HAP-1 (cell line): ENCODE measurements at regions of chrX and their contacts with region 1.

Region 1: DNA sequence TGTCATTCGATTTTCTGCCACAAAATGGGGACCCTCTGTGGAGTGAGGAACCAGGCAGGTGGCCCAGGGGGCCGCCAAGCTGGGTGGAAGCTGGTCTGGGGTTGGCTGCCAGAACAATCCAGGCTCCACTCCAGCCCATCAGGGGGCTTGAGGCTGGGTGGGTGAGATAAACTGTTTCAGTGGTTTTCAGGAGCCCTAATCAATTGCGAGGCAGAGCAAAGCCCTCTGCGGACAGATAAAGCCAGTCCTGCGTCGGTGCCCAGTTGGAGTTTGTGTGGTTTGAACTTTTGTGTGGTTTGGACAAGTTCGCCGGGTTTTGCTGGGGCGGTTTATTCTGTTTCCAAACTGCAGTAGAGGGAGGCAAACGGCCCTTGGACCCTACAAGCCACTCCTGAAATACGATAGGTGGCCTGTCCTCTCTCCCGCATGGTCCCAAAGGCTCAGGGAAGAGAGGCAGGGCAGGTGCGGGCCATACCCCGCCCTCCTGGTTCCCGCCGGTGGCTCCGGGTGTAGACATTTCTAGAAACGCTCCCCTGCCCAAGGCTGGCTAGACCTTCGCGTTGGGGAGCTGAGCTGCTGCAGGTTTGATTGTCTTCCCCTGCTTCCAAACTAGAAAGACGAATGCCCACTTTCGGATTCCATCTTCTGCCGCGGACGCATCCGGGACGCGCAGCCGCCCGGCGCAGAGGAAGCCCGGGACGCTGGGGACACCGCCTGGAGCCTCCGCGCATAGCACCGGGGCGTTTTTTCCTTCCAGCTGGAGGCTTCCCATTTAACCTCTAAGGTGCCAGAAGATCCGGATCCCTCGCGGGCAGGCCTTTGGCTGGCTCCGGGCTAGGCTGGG is 169.0 kb upstream of the BCOR start:
- DNase-seq: peak; percentile 57 to 86
- H3K4me3 ChIP-seq: peak overlapping the region; percentile 34
- H3K4me1 ChIP-seq: peaks cover 12% of the 10 kb centered on the region
- H3K27me3 ChIP-seq: no peaks in the 10 kb centered on the region

Region 2: GRCh38 chrX:38494239-38494823 is 1772.4 kb before region 1 on chrX:
- in situ Hi-C with region 1: no loop called
- DNase-seq: no peak
- H3K4me3 ChIP-seq: no peak overlapping the region
- H3K4me1 ChIP-seq: no peaks in the 10 kb centered on the region
- H3K27me3 ChIP-seq: no peaks in the 10 kb centered on the region

Region 3: DNA sequence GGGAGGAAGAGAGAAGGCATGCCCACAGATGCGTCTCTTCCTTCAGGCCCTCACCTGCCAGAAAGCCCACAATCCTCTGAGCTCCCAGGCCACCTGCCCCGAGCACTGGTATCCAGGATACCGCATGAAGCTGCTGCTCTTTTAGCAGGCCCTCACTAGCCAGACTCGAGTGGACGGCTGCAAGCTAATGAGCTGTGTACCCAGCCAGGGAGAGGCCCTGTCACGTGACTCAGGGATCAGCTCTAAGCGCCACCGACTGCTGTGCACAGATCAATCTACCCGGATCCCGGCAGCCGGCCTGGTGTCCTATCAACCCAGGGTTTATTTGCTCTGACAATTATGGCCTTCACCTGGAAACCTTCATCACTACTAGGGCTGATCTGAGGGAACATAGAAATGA is 208.0 kb before region 1 on chrX:
- in situ Hi-C with region 1: no loop called
- DNase-seq: no peak
- H3K4me3 ChIP-seq: no peak overlapping the region
- H3K4me1 ChIP-seq: no peaks in the 10 kb centered on the region
- H3K27me3 ChIP-seq: no peaks in the 10 kb centered on the region

Region 4: DNA sequence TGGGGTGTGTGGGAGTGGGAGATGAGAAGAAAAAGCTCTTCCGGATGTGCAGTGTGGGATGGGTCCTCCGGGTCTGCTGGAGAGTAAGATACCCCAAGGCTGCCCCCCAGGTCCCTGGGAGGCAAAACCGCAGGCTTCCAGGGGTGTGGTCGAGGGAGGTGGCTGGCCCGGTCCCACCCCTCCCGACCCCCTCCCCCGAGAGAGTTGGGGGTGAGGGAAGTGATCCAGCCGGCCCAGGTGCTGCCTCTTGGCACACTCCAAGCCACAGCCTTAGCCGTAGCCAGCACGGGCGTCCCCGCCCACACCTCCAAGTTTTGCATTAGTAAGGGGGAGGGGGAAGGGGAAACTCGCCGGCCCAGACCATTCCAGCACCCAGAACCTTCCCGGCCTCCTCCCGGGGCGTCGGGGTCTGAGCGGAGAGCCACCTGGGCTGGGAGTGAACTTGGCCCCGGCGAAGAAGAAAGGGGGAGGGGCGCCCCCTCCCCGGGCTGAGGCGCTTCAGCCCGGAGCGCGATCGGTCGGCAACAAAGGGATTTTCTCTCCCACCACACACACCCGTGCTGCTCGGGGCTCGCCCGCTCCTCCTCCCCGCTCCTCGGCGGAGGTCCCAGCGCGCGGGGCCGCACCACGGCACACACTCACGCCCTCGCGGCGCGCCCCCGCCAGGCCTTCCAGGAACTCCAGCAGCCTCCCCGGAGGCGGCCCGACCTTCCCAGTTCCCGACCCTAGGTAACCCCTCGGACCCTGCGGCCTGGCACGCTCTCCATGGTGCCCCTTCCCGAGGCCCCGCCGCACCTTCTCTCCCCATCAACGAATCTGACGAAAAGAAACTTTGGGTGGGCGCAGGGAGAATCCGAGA is 183.4 kb before region 1 on chrX:
- in situ Hi-C with region 1: loop called (anchors 10 kb)
- DNase-seq: peak in 1 of 2 experiments; percentile 30
- H3K4me3 ChIP-seq: no peak overlapping the region
- H3K4me1 ChIP-seq: peaks cover 32% of the 10 kb centered on the region
- H3K27me3 ChIP-seq: no peaks in the 10 kb centered on the region

Region 5: GRCh38 chrX:40580537-40581335 is 314.0 kb after region 1 on chrX and contains the start of gene ATP6AP2:
- in situ Hi-C with region 1: no loop called
- DNase-seq: peak; percentile 97 to 98
- H3K4me3 ChIP-seq: peak within 1 kb of the TSS; percentile 76
- H3K4me1 ChIP-seq: peaks cover 6% of the 10 kb centered on the region
- H3K27me3 ChIP-seq: no peaks in the 10 kb centered on the region

Region 6: DNA sequence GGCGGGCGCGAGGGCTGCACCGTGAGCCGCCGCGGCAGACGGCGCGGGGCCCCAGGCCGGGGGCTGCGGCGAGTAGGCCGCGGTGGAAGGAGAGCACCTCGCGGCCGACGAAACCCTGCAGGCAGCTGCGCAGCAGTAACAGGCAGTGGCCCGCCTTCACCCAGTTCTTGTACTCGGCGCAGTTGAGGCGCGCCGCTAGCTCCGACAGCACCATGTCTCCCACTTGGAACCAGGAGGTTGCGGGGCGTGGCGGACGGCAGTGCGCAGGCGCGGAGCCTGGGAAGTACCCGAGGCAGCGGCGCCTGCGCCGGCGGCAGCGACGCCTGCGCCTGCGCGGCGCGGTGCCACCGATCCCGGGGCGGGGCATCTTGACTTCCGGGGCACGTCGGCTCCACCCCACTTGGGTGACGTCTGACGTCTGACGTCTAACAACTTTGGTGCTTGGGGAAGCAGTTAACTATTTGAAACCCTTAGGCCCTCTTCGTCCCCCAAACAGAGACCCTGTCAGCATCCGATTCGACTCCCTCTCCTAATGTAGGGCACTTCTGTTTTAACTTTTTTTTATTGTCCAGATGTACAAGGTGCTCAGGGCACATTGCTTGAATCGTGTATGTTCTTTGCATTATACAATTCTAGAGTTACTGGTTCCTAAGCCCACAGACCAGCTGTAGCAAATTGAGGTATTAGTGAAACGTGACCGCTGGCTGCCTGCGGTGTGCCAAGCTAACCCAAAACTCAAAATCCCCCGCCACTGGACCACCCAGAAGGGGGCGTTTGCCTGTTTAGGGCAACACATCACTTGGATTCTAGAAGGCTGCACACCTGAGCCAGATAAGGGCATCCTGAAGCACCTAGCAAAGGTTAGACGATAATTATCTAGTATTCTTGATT is 380.8 kb after region 1 on chrX and contains the start of gene CXorf38:
- in situ Hi-C with region 1: no loop called
- DNase-seq: peak; percentile 87 to 97
- H3K4me3 ChIP-seq: peak within 1 kb of the TSS; percentile 66
- H3K4me1 ChIP-seq: peaks cover 22% of the 10 kb centered on the region
- H3K27me3 ChIP-seq: no peaks in the 10 kb centered on the region